ENCODE measurements at regions of chr13 and their contacts with region 1.

Region 1: DNA sequence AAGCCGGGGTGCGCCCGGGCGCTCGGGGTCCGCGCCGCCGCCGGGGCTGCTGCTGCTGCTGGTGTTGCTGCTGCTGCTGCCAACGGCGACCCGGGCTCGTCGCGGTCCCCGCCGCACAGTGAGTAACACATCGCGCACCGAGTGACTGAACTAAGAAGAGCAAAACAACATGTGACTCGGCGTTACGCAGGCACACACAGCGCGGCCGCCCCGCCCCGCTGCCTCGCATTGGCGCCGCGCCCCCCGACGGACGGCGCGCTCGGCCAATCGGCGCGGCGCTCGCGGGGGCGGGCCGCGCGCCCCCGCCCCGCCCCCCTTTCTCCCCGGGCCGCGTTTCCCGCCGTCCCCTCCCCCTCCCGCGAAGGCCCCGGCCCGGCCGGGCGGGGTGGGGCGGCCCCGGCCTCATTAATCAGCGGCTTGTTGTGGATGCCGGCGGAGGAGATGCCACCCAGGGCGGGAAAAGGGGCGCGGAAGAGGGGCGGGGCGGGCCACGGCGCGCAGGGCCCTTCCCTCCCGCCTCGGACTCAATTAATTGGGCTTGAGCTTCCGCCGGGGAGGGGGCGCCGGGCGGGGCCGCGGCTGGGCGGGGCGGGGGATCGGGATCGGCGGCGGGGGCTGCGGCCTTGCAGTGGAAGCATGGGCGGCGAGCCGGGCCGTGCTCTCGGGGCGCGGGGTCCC is at the start of gene IRS2:
- DNase-seq: peak; percentile 84
- ATAC-seq: peak; percentile 88
- H3K4me3 Mint-ChIP-seq: peak within 1 kb of the TSS; percentile 86
- H3K27ac Mint-ChIP-seq: peak within 1 kb of the TSS; percentile 56
- H3K4me1 Mint-ChIP-seq: peaks cover under 1% of the 10 kb centered on the region
- H3K27me3 Mint-ChIP-seq: peaks cover 4% of the 10 kb centered on the region
- CTCF ChIP-seq: no peak
- total RNA-seq, gene IRS2: 4.2 and 4.4 TPM in 2 replicates

Region 2: DNA sequence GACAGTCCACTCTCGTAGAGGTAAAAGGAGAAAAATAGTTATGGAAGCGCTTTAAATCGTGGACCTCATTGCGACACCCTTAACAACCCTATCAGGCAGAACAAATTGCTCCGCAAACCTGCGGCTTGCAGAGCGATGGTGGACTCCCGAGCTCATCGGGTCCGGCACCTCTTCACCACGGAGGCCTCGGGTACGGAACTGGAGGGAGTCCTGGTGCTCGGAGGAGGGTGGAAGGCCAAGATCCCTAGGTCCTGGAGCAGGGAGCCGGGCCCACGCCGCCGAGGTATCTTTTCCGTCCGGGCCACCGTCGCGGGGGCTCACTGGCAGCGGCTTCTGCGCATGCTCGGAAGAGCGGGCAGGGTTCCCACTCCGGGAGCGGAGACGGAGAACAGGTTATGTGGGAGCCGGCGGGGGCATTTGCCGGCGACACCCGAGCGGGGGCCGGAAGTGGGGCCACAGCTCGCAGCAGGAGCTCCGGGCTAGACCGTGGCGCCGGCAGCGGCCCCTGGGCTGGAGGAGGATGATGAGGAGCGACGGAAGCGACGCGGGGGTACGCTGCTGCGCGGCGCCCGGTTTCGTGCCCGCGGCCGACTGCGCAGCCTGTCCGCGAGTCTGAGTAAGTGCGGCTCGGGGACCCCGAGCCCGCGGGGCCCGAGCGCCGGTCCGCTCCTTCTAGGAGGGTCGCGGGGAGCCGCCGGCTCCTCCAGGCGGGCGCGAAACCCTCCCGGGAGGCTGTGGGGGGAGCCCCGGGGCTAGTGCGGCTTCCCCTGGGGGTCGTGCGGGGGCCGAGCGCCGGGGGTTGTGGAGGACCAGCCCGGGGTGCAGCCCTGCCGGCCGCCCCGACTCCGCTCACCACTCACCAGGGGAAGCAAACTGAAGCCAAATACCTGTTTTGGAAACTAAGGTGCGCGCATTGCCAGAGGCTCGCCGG is 1568.3 kb before region 1 on chr13 and contains the start of gene ABHD13:
- CTCF ChIA-PET with region 1: no interaction called
- POLR2A ChIA-PET with region 1: no interaction called
- intact Hi-C with region 1: loop called (anchors 2 kb)
- DNase-seq: peak; percentile 92
- ATAC-seq: peak; percentile 62
- H3K4me3 Mint-ChIP-seq: peak within 1 kb of the TSS; percentile 96
- H3K27ac Mint-ChIP-seq: peak within 1 kb of the TSS; percentile 96
- H3K4me1 Mint-ChIP-seq: peaks cover 70% of the 10 kb centered on the region
- H3K27me3 Mint-ChIP-seq: no peaks in the 10 kb centered on the region
- CTCF ChIP-seq: no peak
- total RNA-seq, gene ABHD13: 9.4 and 10.9 TPM in 2 replicates

Region 3: DNA sequence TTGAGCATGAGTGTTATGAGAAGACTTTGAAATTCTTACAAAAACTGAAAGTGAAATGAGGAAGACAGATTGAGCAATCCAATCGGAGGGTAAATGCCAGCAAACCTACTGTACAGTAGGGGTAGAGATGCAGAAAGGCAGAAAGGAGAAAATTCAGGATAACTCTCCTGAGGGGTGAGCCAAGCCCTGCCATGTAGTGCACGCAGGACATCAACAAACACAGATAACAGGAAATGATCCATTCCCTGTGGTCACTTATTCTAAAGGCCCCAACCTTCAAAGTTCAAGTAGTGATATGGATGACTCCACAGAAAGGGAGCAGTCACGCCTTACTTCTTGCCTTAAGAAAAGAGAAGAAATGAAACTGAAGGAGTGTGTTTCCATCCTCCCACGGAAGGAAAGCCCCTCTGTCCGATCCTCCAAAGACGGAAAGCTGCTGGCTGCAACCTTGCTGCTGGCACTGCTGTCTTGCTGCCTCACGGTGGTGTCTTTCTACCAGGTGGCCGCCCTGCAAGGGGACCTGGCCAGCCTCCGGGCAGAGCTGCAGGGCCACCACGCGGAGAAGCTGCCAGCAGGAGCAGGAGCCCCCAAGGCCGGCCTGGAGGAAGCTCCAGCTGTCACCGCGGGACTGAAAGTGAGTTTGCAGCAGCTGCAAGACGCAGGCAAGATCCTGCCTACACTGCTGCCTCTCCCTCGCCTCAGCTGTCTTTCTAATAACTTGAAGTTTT is 1516.8 kb before region 1 on chr13 and contains the start of gene TNFSF13B:
- CTCF ChIA-PET with region 1: no interaction called
- POLR2A ChIA-PET with region 1: interaction called, 3 read pairs
- intact Hi-C with region 1: loop called (anchors 5 kb)
- DNase-seq: peak; percentile 26
- ATAC-seq: peak; percentile 74
- H3K4me3 Mint-ChIP-seq: peak within 1 kb of the TSS; percentile 83
- H3K27ac Mint-ChIP-seq: peak within 1 kb of the TSS; percentile 91
- H3K4me1 Mint-ChIP-seq: peaks cover 48% of the 10 kb centered on the region
- H3K27me3 Mint-ChIP-seq: no peaks in the 10 kb centered on the region
- CTCF ChIP-seq: no peak
- total RNA-seq, gene TNFSF13B: 1.7 and 2.7 TPM in 2 replicates

Region 4: GRCh38 chr13:108961542-108962125 is 825.0 kb before region 1 on chr13:
- CTCF ChIA-PET with region 1: interaction called, 10 read pairs
- POLR2A ChIA-PET with region 1: no interaction called
- intact Hi-C with region 1: loop called (anchors 1 kb)
- DNase-seq: no peak
- ATAC-seq: peak; percentile 75
- H3K4me3 Mint-ChIP-seq: no peak overlapping the region
- H3K27ac Mint-ChIP-seq: no peak overlapping the region
- H3K4me1 Mint-ChIP-seq: no peaks in the 10 kb centered on the region
- H3K27me3 Mint-ChIP-seq: peaks cover 2% of the 10 kb centered on the region
- CTCF ChIP-seq: peak; percentile 94

Region 5: DNA sequence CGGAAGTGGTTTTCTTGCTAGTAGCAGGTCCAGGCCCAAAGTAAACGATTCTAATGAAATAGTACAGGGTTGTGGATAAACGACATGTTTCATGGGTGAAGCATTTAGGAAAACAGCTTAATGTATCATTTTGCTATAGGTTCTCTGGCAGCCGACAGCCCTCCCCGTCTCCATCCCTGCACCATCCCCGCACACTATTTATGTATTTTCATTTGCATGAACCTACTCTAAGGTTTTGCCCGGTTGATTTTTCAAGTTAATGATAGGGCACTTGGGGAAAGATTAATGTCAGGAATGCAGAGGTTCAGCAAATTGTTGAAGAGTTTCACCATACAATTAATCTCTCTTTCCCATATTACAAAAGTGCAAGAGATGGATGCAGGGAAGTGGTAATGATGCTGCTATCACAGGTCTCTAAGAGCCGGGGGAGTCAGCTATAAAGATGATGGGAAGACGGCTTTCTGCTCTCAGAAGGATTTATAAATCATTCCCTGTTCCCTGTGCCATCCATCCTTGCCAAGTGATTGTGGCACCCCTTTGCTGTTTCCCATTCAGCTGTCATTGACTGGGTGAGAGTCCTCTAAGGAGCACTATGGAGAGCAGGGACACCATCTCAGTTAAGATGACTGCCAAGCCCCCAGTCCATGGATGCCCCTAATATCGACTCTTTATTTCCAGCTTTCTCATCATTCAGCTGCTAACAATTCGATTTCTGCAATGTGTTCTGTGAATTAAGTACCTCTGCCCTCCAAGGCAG is 186.5 kb before region 1 on chr13:
- CTCF ChIA-PET with region 1: no interaction called
- POLR2A ChIA-PET with region 1: no interaction called
- intact Hi-C with region 1: no loop called
- DNase-seq: no peak
- ATAC-seq: no peak
- H3K4me3 Mint-ChIP-seq: no peak overlapping the region
- H3K27ac Mint-ChIP-seq: no peak overlapping the region
- H3K4me1 Mint-ChIP-seq: no peaks in the 10 kb centered on the region
- H3K27me3 Mint-ChIP-seq: no peaks in the 10 kb centered on the region
- CTCF ChIP-seq: no peak

Region 6: DNA sequence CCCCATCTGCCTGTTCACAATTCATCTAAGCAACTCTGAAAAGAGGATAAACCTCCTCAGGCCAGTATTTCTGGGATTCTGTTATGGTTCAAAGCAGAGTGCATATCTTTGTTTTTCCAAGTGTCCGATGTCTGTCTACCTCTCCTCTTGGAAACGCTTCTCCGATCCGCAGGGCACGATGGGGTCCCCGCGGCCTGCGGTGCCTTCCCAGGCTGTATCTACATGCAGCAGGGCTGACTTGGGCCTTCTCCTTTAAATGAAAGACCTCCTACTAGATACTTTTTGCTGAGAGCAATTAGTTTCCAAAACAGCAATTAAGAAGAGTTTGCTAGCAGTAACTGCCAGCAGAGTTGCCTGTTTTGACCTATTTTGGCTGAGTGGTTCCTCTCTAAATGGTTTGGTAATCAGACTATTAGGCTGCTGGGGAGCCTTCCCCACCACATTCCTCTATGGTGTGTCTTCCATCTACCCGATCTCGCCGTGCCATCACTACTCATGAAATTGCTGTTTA is 544.0 kb after region 1 on chr13:
- CTCF ChIA-PET with region 1: no interaction called
- POLR2A ChIA-PET with region 1: no interaction called
- intact Hi-C with region 1: no loop called
- DNase-seq: no peak
- ATAC-seq: no peak
- H3K4me3 Mint-ChIP-seq: no peak overlapping the region
- H3K27ac Mint-ChIP-seq: no peak overlapping the region
- H3K4me1 Mint-ChIP-seq: no peaks in the 10 kb centered on the region
- H3K27me3 Mint-ChIP-seq: peaks cover 21% of the 10 kb centered on the region
- CTCF ChIP-seq: no peak

Region 7: GRCh38 chr13:111559612-111560403 is 1773.2 kb after region 1 on chr13:
- CTCF ChIA-PET with region 1: no interaction called
- POLR2A ChIA-PET with region 1: no interaction called
- intact Hi-C with region 1: no loop called
- DNase-seq: no peak
- ATAC-seq: no peak
- H3K4me3 Mint-ChIP-seq: no peak overlapping the region
- H3K27ac Mint-ChIP-seq: no peak overlapping the region
- H3K4me1 Mint-ChIP-seq: no peaks in the 10 kb centered on the region
- H3K27me3 Mint-ChIP-seq: peaks cover 5% of the 10 kb centered on the region
- CTCF ChIP-seq: no peak

Measured in activated B cell treated with CpG ODN at 0.5 μM for 24 hours (primary cell).